MCF 10A (cell line): ENCODE measurements at regions of chr3 and their contacts with region 1.

Region 1: DNA sequence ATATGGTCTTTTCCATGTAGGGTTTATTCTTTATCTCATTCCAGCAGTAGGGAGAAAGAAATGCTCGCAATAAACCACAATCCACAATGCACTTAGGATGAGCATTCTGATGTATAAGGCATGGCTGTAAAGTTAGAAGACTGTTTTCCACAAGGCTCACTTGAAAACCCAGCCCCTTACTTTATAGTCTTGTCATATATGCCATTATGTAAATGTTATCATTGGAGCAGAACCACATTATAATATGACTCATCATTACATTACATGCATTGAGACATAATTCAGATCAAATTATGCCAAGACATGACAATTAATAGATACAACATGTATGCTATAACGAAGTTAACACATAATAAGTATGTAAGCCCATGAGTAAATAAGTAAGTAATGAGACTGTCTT is 348.1 kb downstream of the LSAMP start:
- DNase-seq: no peak
- H3K4me3 Mint-ChIP-seq: no peak overlapping the region
- H3K27ac Mint-ChIP-seq: no peak overlapping the region
- H3K4me1 Mint-ChIP-seq: no peaks in the 10 kb centered on the region
- H3K27me3 Mint-ChIP-seq: no peaks in the 10 kb centered on the region
- CTCF ChIP-seq: no peak

Region 2: GRCh38 chr3:115937054-115937453 is 160.2 kb before region 1 on chr3:
- CTCF ChIA-PET with region 1: no interaction called
- POLR2A ChIA-PET with region 1: no interaction called
- intact Hi-C with region 1: loop called (anchors 10 kb)
- DNase-seq: no peak
- H3K4me3 Mint-ChIP-seq: no peak overlapping the region
- H3K27ac Mint-ChIP-seq: no peak overlapping the region
- H3K4me1 Mint-ChIP-seq: no peaks in the 10 kb centered on the region
- H3K27me3 Mint-ChIP-seq: no peaks in the 10 kb centered on the region
- CTCF ChIP-seq: peak; percentile 34